ENCODE measurements at regions of chr1 and their contacts with region 1.

Region 1: GRCh38 chr1:147172168-147172992 is at the start of gene PRKAB2:
- DNase-seq: peak; percentile 97
- H3K4me3 ChIP-seq: peak within 1 kb of the TSS; percentile 72 to 94 (median 79)
- H3K27ac ChIP-seq: peak within 1 kb of the TSS; percentile 74
- H3K4me1 ChIP-seq: peaks cover 12% of the 10 kb centered on the region
- H3K27me3 ChIP-seq: no peaks in the 10 kb centered on the region
- CTCF ChIP-seq: peak; percentile 88 to 97
- POLR2A ChIP-seq: peak; percentile 75
- total RNA-seq, gene PRKAB2: 6.2 and 8.1 TPM in 2 replicates

Region 2: DNA sequence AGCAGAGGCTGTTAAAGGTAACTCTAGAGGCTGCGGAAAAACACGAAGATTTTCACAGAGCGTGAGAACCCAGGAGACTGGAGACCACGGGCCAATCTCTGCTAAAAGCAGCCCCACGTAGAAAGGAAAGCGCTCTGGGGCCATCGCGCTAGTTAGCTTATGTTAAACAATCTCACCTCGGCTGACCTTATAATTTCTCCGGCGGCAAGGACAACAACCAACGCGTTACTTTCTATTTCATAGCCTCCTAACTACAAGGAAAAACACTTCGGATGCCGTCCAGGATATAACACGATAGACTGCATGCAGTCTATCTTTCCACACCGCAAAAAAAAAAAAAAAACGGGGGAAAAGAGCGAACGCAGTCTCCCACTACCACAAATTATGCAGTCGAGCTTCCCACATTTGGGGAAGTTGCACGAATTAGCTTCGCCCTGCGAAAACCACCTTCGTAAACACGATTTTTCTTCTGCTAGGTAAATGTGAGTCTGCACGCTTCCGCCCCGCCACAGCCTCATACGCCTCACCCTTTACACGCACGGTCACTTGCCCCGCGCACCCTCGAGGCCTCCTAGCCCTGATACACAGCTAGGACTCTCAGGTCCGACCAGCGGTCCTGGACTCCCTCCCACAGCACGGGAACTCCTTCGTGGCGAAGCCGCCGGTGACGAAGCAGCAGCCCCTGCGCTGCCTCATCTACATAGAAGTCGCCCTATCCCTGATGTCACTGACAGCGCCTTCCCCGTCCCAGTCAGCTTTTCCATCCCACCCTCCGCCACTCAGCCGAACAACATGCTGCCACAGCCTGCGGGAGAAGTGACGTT is 87.9 kb before region 1 on chr1:
- CTCF ChIA-PET with region 1: interaction called, 4 read pairs
- POLR2A ChIA-PET with region 1: interaction called, 5 read pairs
- dilution Hi-C with region 1: no loop called
- intact Hi-C with region 1: loop called (anchors 5 kb)
- DNase-seq: peak; percentile 75
- H3K4me3 ChIP-seq: peak overlapping the region; percentile 30 to 57 (median 45)
- H3K27ac ChIP-seq: peak overlapping the region; percentile 32
- H3K4me1 ChIP-seq: no peaks in the 10 kb centered on the region
- H3K27me3 ChIP-seq: peaks cover 41 to 55% of the 10 kb centered on the region in 2 experiments
- CTCF ChIP-seq: no peak
- POLR2A ChIP-seq: peak; percentile 100

Region 3: DNA sequence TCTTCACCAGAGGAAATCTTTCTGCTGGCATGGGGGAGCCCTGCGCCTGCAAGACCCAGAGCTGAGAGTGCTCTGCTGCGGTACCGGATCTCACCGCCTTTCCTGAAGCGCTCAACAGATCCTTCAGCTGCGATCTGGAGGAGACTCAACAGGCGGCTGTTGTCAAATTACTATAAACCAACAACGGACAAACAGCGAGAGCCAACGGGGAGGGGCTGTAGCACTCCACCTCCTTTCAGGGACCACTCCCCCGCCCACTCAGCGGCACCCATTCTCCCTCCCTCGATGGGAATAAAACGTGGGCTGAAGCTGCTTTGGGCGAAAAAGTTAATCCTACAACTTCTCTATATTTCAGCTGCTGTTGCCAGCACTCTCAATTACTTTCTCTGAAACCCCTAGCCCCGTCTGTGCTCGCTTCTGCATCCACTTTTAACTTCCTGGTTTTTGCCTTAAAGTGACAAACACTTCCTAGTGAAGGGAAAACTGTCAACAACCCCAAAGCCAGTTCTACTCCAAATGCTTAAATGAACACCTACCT is 52.9 kb after region 1 on chr1 and contains the start of gene FMO5:
- CTCF ChIA-PET with region 1: no interaction called
- POLR2A ChIA-PET with region 1: no interaction called
- dilution Hi-C with region 1: no loop called
- intact Hi-C with region 1: loop called (anchors 1 kb)
- DNase-seq: peak; percentile 57
- H3K4me3 ChIP-seq: peak within 1 kb of the TSS; percentile 55 to 91 (median 60)
- H3K27ac ChIP-seq: no peak within 1 kb of the TSS
- H3K4me1 ChIP-seq: peaks cover 4% of the 10 kb centered on the region
- H3K27me3 ChIP-seq: peaks cover 2 to 4% of the 10 kb centered on the region in 2 experiments
- CTCF ChIP-seq: no peak
- POLR2A ChIP-seq: no peak
- total RNA-seq, gene FMO5: 0.60 and 1.3 TPM in 2 replicates

Region 4: DNA sequence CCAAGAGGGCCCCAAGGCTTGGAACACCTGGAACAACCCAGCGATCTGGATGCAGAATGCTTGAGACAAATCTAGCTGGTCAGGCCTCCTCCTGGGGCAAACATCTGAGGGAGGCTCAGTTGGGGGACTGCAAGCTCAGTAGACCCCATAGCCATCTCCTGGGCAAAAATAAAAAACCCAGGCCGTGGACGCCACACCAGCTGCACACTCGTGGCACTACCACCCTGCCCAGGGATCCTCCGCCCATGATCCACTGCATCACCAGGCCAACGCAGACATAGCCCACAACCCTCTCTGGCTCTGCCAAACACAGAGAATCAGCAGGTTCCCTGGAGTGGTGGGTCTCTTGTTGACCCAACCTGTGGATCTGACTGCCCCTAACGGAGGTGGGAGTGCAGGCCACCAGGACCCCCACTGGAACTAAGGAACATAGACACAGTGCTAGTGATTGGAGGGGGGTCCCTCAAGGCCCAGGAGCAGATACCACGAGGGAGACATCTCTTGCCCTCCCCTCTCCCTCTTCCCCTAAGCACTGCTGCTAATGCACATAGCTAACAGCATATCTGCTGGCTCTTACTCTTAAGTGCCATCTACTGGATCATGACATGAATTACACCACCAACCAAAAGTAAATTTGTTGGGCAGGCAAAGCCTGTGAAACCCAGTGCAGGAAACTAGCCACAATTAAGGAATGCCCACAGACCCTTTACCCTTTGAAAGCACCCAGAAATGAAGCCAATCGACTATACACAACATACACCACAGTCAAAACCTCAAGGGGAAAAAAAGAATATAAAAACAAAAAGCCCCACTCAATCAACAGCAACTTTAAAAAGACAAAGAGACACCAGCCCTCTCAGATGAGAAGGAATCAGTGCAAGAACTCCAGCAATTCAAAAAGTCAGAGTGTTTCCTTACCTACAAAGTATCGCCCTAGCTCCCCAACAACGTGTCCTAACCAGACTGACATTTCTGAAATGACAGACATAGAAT is 217.4 kb after region 1 on chr1:
- CTCF ChIA-PET with region 1: interaction called, 5 read pairs
- POLR2A ChIA-PET with region 1: no interaction called
- dilution Hi-C with region 1: no loop called
- intact Hi-C with region 1: loop called (anchors 2 kb)
- DNase-seq: peak; percentile 39
- H3K4me3 ChIP-seq: no peak overlapping the region
- H3K27ac ChIP-seq: no peak overlapping the region
- H3K4me1 ChIP-seq: no peaks in the 10 kb centered on the region
- H3K27me3 ChIP-seq: peaks cover 0 to 3% of the 10 kb centered on the region in 2 experiments
- CTCF ChIP-seq: peak; percentile 43 to 57
- POLR2A ChIP-seq: no peak

Region 5: DNA sequence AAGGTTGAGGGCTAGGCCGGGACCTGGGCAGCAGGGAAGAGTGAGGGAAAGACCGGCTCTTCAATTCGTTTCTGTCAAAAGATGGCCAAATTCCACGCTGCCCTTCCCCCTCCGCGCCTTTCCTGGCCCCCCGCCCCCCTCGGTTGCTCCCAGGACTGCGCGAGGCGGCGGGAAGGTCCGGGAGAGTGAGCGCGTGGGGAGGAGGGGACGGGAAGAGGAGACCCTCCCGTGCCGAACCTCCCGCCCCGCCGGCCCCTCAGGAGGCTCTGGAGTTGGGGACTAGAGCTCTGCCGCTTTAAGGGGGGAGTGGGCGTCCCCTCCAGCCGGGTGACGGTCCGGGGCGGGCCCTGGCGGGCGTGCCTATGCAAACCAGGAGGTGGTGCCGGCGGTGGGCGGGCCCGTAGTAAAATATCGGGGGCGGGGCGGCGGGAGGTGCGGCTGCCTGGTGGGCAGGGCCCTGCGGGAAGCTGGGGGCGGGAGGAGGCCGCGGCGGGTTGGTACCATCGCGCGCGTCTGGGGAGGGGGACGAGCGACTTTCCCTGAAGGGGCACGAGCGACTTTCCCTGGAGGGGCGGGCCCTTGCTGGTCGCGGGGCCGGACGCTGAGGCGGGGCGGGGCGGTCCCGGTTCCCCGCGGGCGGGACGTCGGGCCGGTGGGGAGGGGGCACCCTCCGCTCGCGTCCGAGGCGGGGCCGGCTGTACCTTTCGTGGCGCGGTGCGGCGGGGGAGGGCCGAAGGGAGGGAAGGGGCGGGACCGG is 427.2 kb after region 1 on chr1:
- CTCF ChIA-PET with region 1: no interaction called
- POLR2A ChIA-PET with region 1: no interaction called
- dilution Hi-C with region 1: no loop called
- intact Hi-C with region 1: loop called (anchors 5 kb)
- DNase-seq: peak; percentile 98
- H3K4me3 ChIP-seq: peak overlapping the region; percentile 76 to 91 (median 78)
- H3K27ac ChIP-seq: no peak overlapping the region
- H3K4me1 ChIP-seq: peaks cover 13% of the 10 kb centered on the region
- H3K27me3 ChIP-seq: peaks cover 3 to 4% of the 10 kb centered on the region in 2 experiments
- CTCF ChIP-seq: no peak
- POLR2A ChIP-seq: no peak

Measured in endothelial cell of umbilical vein (primary cell).